HEK293 (cell line): ENCODE measurements at regions of chr19 and their contacts with region 1.

Region 1: GRCh38 chr19:36850559-36851442 is at the start of gene ZNF345:
- H3K4me3 ChIP-seq: peak within 1 kb of the TSS; percentile 66
- H3K27ac ChIP-seq: peak within 1 kb of the TSS; percentile 66
- H3K4me1 ChIP-seq: peaks cover 6% of the 10 kb centered on the region; the same call in 1 of the 2 replicates
- CTCF ChIP-seq: peak; percentile 55; the same call in 1 of the 2 replicates

Region 2: GRCh38 chr19:36528194-36528920 is 322.4 kb before region 1 on chr19 and contains the start of gene ZNF260:
- CTCF ChIA-PET with region 1: no interaction called
- POLR2A ChIA-PET with region 1: interaction called, 11 read pairs
- H3K4me3 ChIP-seq: peak within 1 kb of the TSS; percentile 91
- H3K27ac ChIP-seq: peak within 1 kb of the TSS; percentile 96
- H3K4me1 ChIP-seq: peaks cover 8% of the 10 kb centered on the region; the same call in 1 of the 2 replicates
- CTCF ChIP-seq: peak; percentile 45; the same call in 1 of the 2 replicates

Region 3: DNA sequence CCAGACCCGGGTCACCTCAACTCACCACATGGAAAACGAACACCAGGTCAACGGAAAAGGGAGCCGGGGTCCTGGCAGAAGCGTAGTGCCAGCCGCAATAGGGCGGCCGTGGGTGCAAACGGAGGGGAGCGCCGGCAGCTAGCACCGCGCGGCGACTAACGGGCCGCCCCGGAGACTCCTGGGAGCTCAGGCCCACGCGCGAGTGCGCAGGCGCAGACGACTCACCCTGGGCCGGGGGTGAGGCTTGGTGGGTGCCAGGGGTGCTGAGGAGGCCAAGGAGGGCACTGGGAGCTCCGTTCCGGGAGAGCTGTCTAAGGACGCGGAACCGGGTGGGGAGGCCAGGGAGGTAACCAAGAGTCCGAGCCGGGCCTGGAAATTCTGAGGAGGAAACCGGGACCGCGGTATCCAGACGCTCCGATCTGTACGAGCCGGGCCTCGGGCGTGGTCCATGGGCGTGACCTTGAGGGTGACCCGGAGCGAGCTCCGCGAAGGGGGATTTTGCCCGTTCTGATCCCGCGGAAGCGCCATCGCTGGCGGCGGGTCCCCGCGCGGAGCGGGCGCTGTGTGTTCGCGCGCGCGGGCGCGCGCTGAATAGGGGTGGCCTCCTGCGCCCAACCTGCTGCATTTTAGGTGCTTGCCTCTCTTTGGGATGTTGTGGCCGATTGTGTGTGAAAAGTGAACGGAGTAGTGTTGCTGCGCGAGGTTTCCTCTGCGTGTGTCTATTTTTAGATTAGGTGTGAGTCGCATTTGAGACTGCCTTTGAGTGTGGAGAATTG is 245.5 kb before region 1 on chr19 and contains the start of gene ZNF382:
- CTCF ChIA-PET with region 1: no interaction called
- POLR2A ChIA-PET with region 1: interaction called, 12 read pairs
- H3K4me3 ChIP-seq: peak within 1 kb of the TSS; percentile 57
- H3K27ac ChIP-seq: peak within 1 kb of the TSS; percentile 98
- H3K4me1 ChIP-seq: peaks cover 6% of the 10 kb centered on the region
- CTCF ChIP-seq: no peak; the same call in none of the 2 replicates

Region 4: DNA sequence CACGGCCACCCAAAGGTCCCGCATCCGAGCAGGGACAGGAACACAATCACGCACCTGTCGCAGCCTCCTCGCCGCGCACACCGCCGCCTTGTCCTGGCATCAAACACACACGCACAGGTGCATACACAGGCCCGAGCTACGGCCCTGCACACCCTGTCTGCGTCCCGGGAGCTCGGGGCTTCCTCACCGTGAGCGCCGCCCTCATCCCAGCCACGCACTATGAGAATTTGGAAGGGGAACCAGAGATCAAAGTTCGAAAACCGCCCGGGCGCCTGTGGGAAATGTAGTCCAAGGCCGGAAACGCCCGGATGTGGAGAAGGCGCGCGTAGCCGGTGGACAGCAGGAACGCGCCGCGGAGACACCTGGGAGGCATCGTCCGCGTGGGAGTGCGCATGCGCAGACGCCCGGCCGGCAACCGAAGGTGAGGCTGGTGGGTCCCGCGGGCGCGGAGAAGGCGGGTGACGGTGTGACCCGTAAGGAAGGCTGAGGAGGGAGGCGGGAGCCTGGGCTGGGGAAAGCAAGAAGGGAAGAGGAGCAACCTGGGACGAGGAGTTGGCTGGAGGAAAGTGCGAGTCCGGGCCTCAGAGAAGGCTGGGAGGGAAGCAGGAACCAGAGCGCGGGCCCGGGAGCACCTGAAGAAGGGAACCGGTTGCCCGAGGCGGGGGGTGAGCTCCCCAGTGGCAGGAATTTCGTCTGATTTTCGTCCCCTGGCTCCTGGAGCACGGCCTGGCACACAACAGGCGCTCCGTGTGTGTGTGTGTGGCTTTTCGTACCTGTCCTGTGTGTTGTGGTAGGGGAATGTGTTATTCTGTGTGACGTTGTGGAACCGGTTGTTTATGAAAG is 163.4 kb before region 1 on chr19 and contains the start of gene ZNF567:
- CTCF ChIA-PET with region 1: no interaction called
- POLR2A ChIA-PET with region 1: interaction called, 15 read pairs
- H3K4me3 ChIP-seq: peak within 1 kb of the TSS; percentile 61
- H3K27ac ChIP-seq: peak within 1 kb of the TSS; percentile 87
- H3K4me1 ChIP-seq: peaks cover 10% of the 10 kb centered on the region; the same call in 1 of the 2 replicates
- CTCF ChIP-seq: peak; percentile 68

Region 5: DNA sequence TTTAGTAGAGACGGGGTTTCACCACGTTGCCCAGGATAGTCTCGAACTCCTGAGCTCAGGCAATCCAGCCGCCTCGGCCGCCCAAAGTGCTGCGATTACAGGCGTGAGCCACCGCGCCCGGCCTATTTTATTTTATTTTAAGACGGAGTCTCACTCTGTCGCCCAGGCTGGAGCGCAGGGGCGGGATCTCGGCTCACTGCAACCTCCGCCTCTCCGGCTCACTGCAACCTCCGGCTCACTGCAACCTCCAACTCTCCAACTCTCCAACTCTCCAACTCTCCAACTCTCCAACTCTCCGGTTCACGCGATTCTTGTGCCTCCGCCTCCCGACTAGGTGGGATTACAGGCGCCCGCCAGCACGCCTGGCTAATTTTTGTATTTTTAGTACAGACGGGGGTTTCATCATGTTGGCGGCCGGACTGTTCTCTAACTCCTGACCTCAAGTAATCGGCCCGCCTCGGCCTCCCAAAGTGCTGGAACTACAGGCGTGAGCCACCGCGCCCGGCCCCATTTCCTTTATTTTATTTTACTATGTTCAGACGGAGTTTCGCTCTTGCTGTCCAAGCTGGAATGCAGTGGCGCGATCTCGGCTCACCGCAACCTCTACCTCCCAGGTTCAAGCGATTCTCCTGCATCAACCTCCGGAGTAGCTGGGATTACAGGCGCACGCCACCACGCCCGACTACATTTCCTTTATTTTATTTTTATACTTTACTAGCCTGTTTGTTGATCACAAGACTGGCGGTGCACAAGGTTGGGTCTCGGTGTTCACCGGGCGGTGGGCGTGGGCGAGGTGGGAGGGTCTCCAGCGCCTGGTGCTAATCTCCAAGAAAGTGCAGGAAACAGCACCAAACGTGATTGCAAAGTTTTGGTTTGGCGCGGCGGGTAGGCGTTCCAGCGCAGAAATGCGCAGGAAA is 54.5 kb before region 1 on chr19:
- CTCF ChIA-PET with region 1: no interaction called
- POLR2A ChIA-PET with region 1: interaction called, 11 read pairs
- H3K4me3 ChIP-seq: peak overlapping the region; percentile 43
- H3K27ac ChIP-seq: peak overlapping the region; percentile 67; the same call in 1 of the 2 replicates
- H3K4me1 ChIP-seq: no peaks in the 10 kb centered on the region
- CTCF ChIP-seq: no peak

Region 6: DNA sequence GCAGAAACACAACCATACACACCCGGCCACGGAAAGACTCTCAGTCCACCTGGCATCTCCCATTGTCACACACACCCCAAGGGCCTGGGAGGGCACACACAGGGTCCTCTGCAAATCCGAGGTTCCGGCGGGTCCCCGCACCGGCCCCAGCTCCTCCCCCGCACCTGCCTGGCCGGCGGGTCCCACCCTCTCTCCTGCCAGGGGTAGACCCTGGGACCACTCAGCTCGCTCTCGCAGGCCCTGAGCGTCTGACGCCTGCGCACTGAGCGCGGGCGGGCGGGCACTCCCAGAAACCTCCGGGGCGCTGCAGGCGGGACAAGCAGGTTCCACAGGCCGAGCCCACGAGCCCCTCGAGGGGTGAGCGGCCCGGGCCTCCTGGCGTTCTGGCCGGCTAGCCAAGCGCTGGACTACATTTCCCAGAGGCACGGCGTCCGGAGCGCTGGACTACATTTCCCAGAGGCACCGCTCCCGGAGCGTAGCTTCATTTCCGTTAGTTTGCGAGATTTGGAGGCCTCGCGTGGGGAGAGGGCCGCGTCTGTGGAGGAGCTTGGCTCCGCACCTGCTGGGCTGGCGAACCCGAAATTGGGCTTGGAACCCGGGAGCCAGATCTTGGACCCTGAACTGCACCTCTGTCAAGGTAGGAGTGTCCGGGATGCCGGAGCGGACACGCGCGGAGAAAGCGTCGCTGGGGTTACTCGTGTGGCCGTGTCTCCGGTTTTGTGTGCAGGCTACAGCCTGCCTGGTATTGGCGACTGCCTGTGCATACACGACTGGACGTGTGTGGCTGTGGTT is 227.3 kb after region 1 on chr19 and contains the start of gene ZNF420:
- CTCF ChIA-PET with region 1: no interaction called
- POLR2A ChIA-PET with region 1: interaction called, 12 read pairs
- H3K4me3 ChIP-seq: peak within 1 kb of the TSS; percentile 73
- H3K27ac ChIP-seq: peak within 1 kb of the TSS; percentile 57
- H3K4me1 ChIP-seq: peaks cover 7% of the 10 kb centered on the region; the same call in 1 of the 2 replicates
- CTCF ChIP-seq: no peak; the same call in none of the 2 replicates